Tibial artery (tissue), 4 donors: ENCODE measurements at regions of chr17 and their contacts with region 1.

Region 1: GRCh38 chr17:66177048-66177447 is 14.9 kb downstream of the CEP112 start:
- DNase-seq: no peak
- H3K4me3 ChIP-seq: no peak overlapping the region
- H3K27ac ChIP-seq: no peak overlapping the region
- H3K4me1 ChIP-seq: no peaks in the 10 kb centered on the region
- H3K27me3 ChIP-seq: no peaks in the 10 kb centered on the region
- CTCF ChIP-seq: no peak

Region 2: GRCh38 chr17:65231662-65232335 is 945.2 kb before region 1 on chr17:
- intact Hi-C with region 1: loop called (anchors 10 kb)
- DNase-seq: no peak
- H3K4me3 ChIP-seq: no peak overlapping the region
- H3K27ac ChIP-seq: no peak overlapping the region
- H3K4me1 ChIP-seq: peaks cover 0 to 3% (median 0%) of the 10 kb centered on the region in 4 donors
- H3K27me3 ChIP-seq: peaks cover 0 to 20% of the 10 kb centered on the region in 2 donors
- CTCF ChIP-seq: peak; percentile 42 to 46

Region 3: GRCh38 chr17:66123163-66123562 is 53.9 kb before region 1 on chr17:
- intact Hi-C with region 1: no loop called
- DNase-seq: no peak
- H3K4me3 ChIP-seq: no peak overlapping the region
- H3K27ac ChIP-seq: no peak overlapping the region
- H3K4me1 ChIP-seq: no peaks in the 10 kb centered on the region
- H3K27me3 ChIP-seq: no peaks in the 10 kb centered on the region
- CTCF ChIP-seq: no peak